Endothelial cell of umbilical vein (primary cell): ENCODE measurements at regions of chr12 and their contacts with region 1.

Region 1: GRCh38 chr12:58920102-58920960 is at the start of gene LRIG3:
- DNase-seq: peak; percentile 99
- H3K4me3 ChIP-seq: peak within 1 kb of the TSS; percentile 89 to 99 (median 96)
- H3K27ac ChIP-seq: peak within 1 kb of the TSS; percentile 91
- H3K4me1 ChIP-seq: peaks cover 43% of the 10 kb centered on the region
- H3K27me3 ChIP-seq: no peaks in the 10 kb centered on the region
- CTCF ChIP-seq: no peak
- POLR2A ChIP-seq: no peak
- total RNA-seq, gene LRIG3: 42.9 and 55.5 TPM in 2 replicates

Region 2: DNA sequence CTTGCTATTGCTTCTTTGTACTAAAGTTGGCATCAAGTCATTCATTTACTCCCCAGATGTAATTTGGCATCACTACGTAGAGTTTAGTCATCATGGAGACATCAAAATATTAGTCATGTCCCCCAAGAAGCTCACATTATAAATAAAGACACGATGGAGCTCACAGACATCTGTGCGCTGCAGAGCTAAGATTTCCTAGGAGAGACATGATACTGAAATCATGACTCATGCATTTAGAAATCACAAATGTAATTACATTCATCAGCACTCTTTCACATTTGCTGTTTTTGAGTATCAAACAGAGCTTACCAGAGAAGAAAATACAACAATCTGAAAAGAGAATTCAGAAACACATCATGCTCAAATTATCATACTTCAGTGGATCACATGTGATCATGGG is 169.8 kb before region 1 on chr12:
- CTCF ChIA-PET with region 1: no interaction called
- POLR2A ChIA-PET with region 1: no interaction called
- dilution Hi-C with region 1: no loop called
- intact Hi-C with region 1: no loop called
- DNase-seq: no peak
- H3K4me3 ChIP-seq: no peak overlapping the region
- H3K27ac ChIP-seq: no peak overlapping the region
- H3K4me1 ChIP-seq: no peaks in the 10 kb centered on the region
- H3K27me3 ChIP-seq: peaks cover 0 to 2% of the 10 kb centered on the region in 2 experiments
- CTCF ChIP-seq: no peak
- POLR2A ChIP-seq: no peak

Region 3: DNA sequence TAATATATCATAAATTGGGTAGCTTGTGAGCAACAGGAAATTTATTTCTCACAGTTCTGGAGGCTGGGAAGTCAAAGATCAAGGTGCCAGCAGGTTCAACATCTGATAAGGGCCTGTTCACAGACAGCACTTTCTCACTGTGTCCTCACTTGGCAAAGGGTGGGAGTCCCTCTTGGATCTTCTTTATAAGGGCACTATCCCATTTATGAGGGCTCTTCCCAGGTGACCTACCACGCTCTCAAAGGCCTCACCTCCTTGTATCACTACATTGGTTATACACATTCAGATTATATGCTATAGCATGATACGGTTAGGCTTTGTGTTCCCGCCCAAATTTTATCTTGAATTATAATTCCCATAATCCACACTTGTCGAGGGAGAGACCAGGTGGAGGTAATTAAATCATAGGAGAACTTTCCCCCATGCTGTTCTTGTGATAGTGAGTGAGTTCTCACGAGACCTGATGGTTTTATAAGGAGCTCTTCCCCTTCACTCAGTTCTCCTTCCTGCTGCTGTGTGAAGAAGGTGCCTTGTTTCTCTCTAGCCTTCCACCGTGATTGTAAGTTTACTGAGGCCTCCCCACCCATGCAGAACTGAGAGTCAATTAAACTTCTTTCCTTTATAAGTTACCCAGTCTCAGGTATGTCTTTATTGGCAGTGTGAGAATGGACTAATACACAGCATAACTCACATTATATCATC is 19.2 kb after region 1 on chr12:
- CTCF ChIA-PET with region 1: interaction called, 5 read pairs
- POLR2A ChIA-PET with region 1: no interaction called
- dilution Hi-C with region 1: no loop called
- intact Hi-C with region 1: loop called (anchors 2 kb)
- DNase-seq: no peak
- H3K4me3 ChIP-seq: no peak overlapping the region
- H3K27ac ChIP-seq: no peak overlapping the region
- H3K4me1 ChIP-seq: peaks cover 36% of the 10 kb centered on the region
- H3K27me3 ChIP-seq: no peaks in the 10 kb centered on the region
- CTCF ChIP-seq: no peak
- POLR2A ChIP-seq: no peak

Region 4: DNA sequence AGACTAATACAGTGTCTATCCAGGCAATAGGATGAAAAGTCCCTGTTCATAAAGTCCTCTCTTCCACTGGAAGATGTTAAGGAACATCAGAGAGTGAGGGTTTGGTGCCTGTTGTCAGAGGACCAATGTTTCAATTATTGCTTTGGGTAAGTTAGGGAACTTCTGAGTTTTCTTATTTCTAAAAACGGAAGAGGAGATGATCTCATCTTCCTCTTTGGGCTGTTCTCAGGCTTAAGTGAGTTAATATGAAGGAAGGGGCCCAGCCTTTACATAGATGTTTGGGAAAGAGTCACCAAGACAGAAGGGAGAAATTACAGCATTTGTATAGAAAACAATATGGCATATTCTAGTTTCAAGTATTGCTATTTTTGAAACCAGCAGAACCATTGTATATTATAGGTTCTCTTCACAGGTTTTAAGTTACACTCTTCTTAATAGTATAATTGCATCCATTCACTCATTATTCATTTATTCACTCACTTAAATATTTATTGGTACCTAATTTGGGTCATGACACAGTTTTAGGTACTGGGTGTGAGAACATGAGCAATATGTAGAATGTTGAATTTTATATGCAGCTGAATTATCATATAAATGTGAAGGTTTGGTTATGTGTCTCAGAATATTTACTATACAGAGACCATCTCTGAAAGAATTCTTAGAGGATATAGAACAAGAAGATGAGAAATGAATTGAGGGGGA is 68.5 kb after region 1 on chr12:
- CTCF ChIA-PET with region 1: no interaction called
- POLR2A ChIA-PET with region 1: no interaction called
- dilution Hi-C with region 1: no loop called
- intact Hi-C with region 1: loop called (anchors 2 kb)
- DNase-seq: peak; percentile 48
- H3K4me3 ChIP-seq: no peak overlapping the region
- H3K27ac ChIP-seq: no peak overlapping the region
- H3K4me1 ChIP-seq: peaks cover 3% of the 10 kb centered on the region
- H3K27me3 ChIP-seq: no peaks in the 10 kb centered on the region
- CTCF ChIP-seq: no peak
- POLR2A ChIP-seq: no peak

Region 5: DNA sequence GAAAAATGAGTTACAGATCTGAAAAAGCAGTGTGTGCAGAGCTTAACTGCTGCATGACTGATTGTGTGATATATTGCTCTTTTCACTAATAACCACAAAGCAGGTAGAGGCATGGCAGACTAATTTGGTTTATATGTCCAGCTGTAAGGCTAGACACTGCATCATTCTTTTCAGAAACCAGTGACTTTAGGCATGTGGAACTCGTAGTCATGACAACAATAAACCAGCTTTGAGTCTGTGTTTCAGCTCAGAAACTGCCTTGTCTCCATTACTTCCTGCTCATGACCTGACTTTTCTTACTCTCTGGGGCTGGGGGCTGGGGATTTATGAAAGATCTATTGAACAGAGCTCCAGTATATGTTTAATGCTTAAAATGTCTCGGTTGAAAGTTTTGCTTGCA is 146.8 kb after region 1 on chr12:
- CTCF ChIA-PET with region 1: interaction called, 4 read pairs
- POLR2A ChIA-PET with region 1: no interaction called
- dilution Hi-C with region 1: no loop called
- intact Hi-C with region 1: loop called (anchors 1 kb)
- DNase-seq: peak; percentile 76
- H3K4me3 ChIP-seq: no peak overlapping the region
- H3K27ac ChIP-seq: no peak overlapping the region
- H3K4me1 ChIP-seq: peaks cover 32% of the 10 kb centered on the region
- H3K27me3 ChIP-seq: no peaks in the 10 kb centered on the region
- CTCF ChIP-seq: no peak
- POLR2A ChIP-seq: no peak

Region 6: GRCh38 chr12:59087077-59087673 is 166.8 kb after region 1 on chr12:
- CTCF ChIA-PET with region 1: interaction called, 9 read pairs
- POLR2A ChIA-PET with region 1: no interaction called
- dilution Hi-C with region 1: no loop called
- intact Hi-C with region 1: loop called (anchors 1 kb)
- DNase-seq: peak; percentile 55
- H3K4me3 ChIP-seq: no peak overlapping the region
- H3K27ac ChIP-seq: no peak overlapping the region
- H3K4me1 ChIP-seq: peaks cover 12% of the 10 kb centered on the region
- H3K27me3 ChIP-seq: no peaks in the 10 kb centered on the region
- CTCF ChIP-seq: peak; percentile 54 to 59
- POLR2A ChIP-seq: no peak

Region 7: GRCh38 chr12:59298296-59298695 is 378.0 kb after region 1 on chr12:
- CTCF ChIA-PET with region 1: no interaction called
- POLR2A ChIA-PET with region 1: no interaction called
- dilution Hi-C with region 1: no loop called
- intact Hi-C with region 1: no loop called
- DNase-seq: no peak
- H3K4me3 ChIP-seq: no peak overlapping the region
- H3K27ac ChIP-seq: no peak overlapping the region
- H3K4me1 ChIP-seq: no peaks in the 10 kb centered on the region
- H3K27me3 ChIP-seq: no peaks in the 10 kb centered on the region
- CTCF ChIP-seq: no peak
- POLR2A ChIP-seq: no peak